ENCODE measurements at regions of chr15 and their contacts with region 1.

Region 1: GRCh38 chr15:82919231-82919886 is 33.2 kb downstream of the HOMER2 start:
- DNase-seq: peak; percentile 56 to 72
- ATAC-seq: peak in 1 of 2 donors; percentile 40
- H3K4me3 ChIP-seq: no peak overlapping the region
- H3K27ac ChIP-seq: peak overlapping the region; percentile 90 to 94 (median 92)
- H3K4me1 ChIP-seq: peaks cover 55 to 81% of the 10 kb centered on the region in 2 donors
- H3K27me3 ChIP-seq: no peaks in the 10 kb centered on the region
- CTCF ChIP-seq: no peak
- POLR2A ChIP-seq: no peak

Region 2: DNA sequence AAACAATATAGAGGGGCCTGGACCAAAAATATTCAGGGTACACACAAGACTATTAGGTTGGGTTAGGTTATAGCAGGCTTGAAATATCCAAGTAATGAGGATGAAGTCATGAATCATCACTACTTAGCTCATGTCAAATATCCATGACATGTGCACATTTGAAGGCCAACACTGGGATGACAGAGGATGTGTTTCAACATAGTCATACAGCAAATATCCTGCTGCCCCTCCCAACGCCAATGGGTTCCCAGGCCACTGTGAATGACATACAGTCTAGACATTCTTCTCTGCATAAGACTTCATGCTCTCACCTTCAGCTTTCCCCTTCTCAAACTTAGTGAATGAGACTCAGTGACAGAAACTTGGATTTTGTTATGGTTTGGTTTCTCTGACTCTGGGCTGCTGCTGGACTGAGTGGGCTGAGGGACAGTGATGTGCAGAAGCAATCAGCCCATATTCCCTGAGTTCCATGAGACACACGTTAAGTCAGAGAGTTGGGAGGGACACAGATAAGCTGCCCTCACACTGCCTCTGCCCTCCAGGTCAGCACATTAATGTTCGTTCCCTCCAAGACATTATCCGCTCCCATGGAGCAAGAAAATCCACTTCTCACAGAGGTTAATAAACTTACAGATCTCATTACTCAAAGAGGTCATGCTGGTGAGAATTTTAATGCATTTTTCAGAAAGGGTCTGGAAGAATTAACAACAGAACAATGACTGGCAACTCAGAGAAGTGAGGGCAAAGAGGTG is 17.8 kb after region 1 on chr15:
- in situ Hi-C with region 1: no loop called
- intact Hi-C with region 1: loop called (anchors 2 kb)
- DNase-seq: peak; percentile 28 to 65
- ATAC-seq: peak; percentile 95
- H3K4me3 ChIP-seq: no peak overlapping the region
- H3K27ac ChIP-seq: peak overlapping the region; percentile 56 to 62 (median 56)
- H3K4me1 ChIP-seq: peaks cover 27 to 33% of the 10 kb centered on the region in 2 donors
- H3K27me3 ChIP-seq: no peaks in the 10 kb centered on the region
- CTCF ChIP-seq: no peak
- POLR2A ChIP-seq: no peak

Measured in gastrocnemius medialis (tissue), 4 donors.